Activated T-helper 1 cell treated with anti-CD3 and anti-CD28 coated beads, Interleukin-12 subunit alpha, Interleukin-12 subunit beta, Interleukin-2, Interleukin-4 antibody, amounts not matched to agents 30 ng/mL and 10 ng/mL and 1 ng/mL, durations not matched to agents 14 hours and 24 hours and 36 hours (primary cell): ENCODE measurements at regions of chr3 and their contacts with region 1.

Region 1: GRCh38 chr3:37129871-37130270 is 44.5 kb downstream of the LRRFIP2 start:
- DNase-seq: no peak
- H3K4me3 Mint-ChIP-seq: no peak overlapping the region
- H3K27ac Mint-ChIP-seq: no peak overlapping the region
- H3K4me1 Mint-ChIP-seq: peaks cover 24% of the 10 kb centered on the region
- H3K27me3 Mint-ChIP-seq: no peaks in the 10 kb centered on the region

Region 2: DNA sequence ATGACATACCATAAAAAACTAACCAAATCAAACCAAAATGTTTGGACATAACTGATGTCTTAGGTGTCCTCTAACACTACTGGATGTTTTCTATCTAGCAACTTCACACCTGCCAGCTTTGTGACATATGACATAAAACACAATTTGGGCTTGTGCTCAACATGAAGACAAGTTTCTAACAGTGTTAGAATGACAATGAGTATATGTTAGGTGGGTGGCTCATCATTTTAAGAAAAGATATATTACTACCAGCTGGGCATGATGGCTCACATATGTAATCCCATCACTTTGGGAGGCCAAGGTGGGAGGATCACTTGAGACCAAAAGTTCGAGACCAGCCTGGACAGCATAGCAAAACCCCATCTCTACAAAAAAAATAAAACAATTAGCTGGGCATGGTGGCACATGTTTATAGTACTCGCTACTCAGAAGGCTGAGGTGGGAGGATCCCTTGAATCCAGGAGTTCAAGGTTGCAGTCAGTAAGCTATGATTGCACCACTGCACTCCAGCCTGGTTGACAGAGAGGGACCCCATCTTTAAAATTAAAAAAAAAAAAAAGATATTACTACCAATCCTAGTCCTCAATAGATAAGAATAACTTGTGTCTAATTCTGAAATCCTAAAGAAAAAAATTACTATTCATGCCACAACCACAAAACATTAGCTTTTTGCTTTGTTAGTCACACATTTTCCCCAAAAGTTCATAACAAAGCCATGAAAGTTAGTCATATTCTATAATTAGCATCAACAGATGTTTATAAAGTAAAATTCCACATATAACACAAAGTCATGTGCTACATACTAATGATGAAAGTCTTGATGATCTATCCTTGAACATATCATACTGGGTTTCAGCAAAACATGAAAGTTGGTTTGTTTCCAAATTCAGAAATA is 15.4 kb before region 1 on chr3:
- intact Hi-C with region 1: loop called (anchors 2 kb)
- DNase-seq: no peak
- H3K4me3 Mint-ChIP-seq: no peak overlapping the region
- H3K27ac Mint-ChIP-seq: no peak overlapping the region
- H3K4me1 Mint-ChIP-seq: peaks cover 8% of the 10 kb centered on the region
- H3K27me3 Mint-ChIP-seq: no peaks in the 10 kb centered on the region

Region 3: GRCh38 chr3:37174532-37175126 is 44.8 kb after region 1 on chr3 and contains the start of gene LRRFIP2:
- intact Hi-C with region 1: loop called (anchors 5 kb)
- DNase-seq: no peak
- H3K4me3 Mint-ChIP-seq: peak within 1 kb of the TSS; percentile 91
- H3K27ac Mint-ChIP-seq: peak within 1 kb of the TSS; percentile 57
- H3K4me1 Mint-ChIP-seq: peaks cover 56% of the 10 kb centered on the region
- H3K27me3 Mint-ChIP-seq: no peaks in the 10 kb centered on the region
- total RNA-seq, gene LRRFIP2: 26.2 and 28.6 TPM in 2 replicates